ENCODE measurements at regions of chr3 and their contacts with region 1.

Region 1: DNA sequence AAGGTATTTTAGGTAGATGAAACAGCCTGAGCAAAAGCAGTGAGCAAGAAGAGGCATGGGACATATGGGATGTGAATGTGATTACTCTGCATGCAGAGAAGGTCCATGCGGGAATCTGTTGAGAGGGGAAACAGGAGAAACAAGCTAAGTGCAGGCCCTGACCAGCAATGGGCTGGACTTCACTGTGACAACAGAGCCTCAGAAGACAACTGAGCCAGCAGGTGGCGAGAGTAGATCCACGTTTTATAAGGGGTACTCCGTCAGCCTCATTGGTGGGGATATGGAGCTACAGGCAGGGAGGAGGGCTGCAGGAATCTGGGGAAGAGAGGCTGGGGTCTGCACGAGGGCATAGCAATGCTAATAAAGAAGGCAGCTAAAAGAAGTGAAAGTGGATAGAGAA is 405.9 kb upstream of the LMCD1 start:
- DNase-seq: peak; percentile 53
- ATAC-seq: peak; percentile 99
- H3K4me3 Mint-ChIP-seq: no peak overlapping the region
- H3K27ac Mint-ChIP-seq: no peak overlapping the region
- H3K4me1 Mint-ChIP-seq: peaks cover 13% of the 10 kb centered on the region
- H3K27me3 Mint-ChIP-seq: no peaks in the 10 kb centered on the region
- CTCF ChIP-seq: no peak

Region 2: GRCh38 chr3:8020047-8020841 is 75.5 kb before region 1 on chr3:
- CTCF ChIA-PET with region 1: no interaction called
- POLR2A ChIA-PET with region 1: no interaction called
- DNase-seq: no peak
- ATAC-seq: peak; percentile 61
- H3K4me3 Mint-ChIP-seq: no peak overlapping the region
- H3K27ac Mint-ChIP-seq: no peak overlapping the region
- H3K4me1 Mint-ChIP-seq: no peaks in the 10 kb centered on the region
- H3K27me3 Mint-ChIP-seq: peaks cover 4% of the 10 kb centered on the region; the same call in 1 of the 2 replicates
- CTCF ChIP-seq: no peak

Region 3: GRCh38 chr3:8111069-8111798 is 15.5 kb after region 1 on chr3:
- CTCF ChIA-PET with region 1: interaction called, 32 read pairs
- POLR2A ChIA-PET with region 1: no interaction called
- DNase-seq: peak; percentile 78
- ATAC-seq: peak; percentile 90
- H3K4me3 Mint-ChIP-seq: no peak overlapping the region
- H3K27ac Mint-ChIP-seq: no peak overlapping the region
- H3K4me1 Mint-ChIP-seq: peaks cover 36% of the 10 kb centered on the region
- H3K27me3 Mint-ChIP-seq: no peaks in the 10 kb centered on the region
- CTCF ChIP-seq: peak; percentile 72

Region 4: GRCh38 chr3:8301728-8302462 is 206.2 kb after region 1 on chr3:
- CTCF ChIA-PET with region 1: interaction called, 15 read pairs
- POLR2A ChIA-PET with region 1: no interaction called
- DNase-seq: no peak
- ATAC-seq: peak; percentile 63
- H3K4me3 Mint-ChIP-seq: no peak overlapping the region
- H3K27ac Mint-ChIP-seq: no peak overlapping the region
- H3K4me1 Mint-ChIP-seq: peaks cover 15% of the 10 kb centered on the region
- H3K27me3 Mint-ChIP-seq: no peaks in the 10 kb centered on the region; the same call in 1 of the 2 replicates
- CTCF ChIP-seq: 0 out of 2 replicates have a peak, but pooled peaks have one; percentile 46

Measured in WTC11 (cell line).